ENCODE measurements at regions of chr2 and their contacts with region 1.

Region 1: DNA sequence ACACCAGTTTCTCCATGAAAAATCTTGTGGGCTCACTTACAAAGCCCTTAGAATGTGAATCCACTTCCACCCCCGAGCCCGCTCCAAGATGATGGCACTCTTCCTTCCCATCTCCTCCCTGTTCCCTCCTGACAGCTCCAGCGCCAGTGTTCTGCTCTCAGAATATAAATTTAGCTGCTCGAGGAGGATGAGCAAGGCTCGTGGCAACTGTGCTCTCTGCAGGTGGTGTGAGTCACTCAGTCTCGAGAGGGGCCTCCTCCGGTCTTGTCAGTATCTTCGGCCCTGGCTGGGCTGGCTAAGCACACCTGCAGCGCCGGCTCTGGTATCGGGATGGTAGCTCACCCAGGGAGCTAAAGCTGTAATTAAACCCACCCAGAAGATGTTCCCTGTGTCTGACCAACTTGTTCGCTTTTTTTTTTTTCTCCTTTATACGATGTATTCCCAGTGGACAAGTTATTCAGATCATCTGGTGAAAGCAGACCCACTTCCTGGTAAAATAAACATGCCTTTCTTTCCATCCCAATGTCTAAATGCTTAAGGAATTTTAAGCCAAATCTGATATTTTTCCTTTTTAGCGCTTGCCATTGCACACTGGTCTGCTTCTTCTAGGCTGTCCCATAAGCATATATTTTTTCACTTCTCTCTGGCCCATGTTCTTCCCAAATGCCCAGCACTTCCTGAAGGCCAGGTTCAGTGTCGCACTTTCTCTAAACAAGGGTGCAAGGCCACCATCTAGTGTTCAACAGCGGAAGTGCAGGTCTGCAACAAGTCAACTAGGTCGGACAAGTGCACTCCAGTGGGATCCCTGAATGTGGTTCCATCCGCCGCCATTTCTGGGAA is 31.4 kb upstream of the YPEL5 start:
- DNase-seq: peak; percentile 27 to 72
- ATAC-seq: peak; percentile 69 to 87
- H3K4me3 ChIP-seq: no peak overlapping the region
- H3K27ac ChIP-seq: no peak overlapping the region
- H3K4me1 ChIP-seq: no peaks in the 10 kb centered on the region
- H3K27me3 ChIP-seq: no peaks in the 10 kb centered on the region
- CTCF ChIP-seq: peak; percentile 71 to 85 (median 81)
- POLR2A ChIP-seq: no peak

Region 2: GRCh38 chr2:29923110-29923721 is 192.1 kb before region 1 on chr2:
- in situ Hi-C with region 1: no loop called
- intact Hi-C with region 1: loop called (anchors 5 kb)
- DNase-seq: peak; percentile 15 to 41
- ATAC-seq: peak in 1 of 2 donors; percentile 38
- H3K4me3 ChIP-seq: no peak overlapping the region
- H3K27ac ChIP-seq: no peak overlapping the region
- H3K4me1 ChIP-seq: peaks cover 10 to 12% of the 10 kb centered on the region in 2 donors
- H3K27me3 ChIP-seq: peaks cover 33 to 56% (median 46%) of the 10 kb centered on the region in 3 donors
- CTCF ChIP-seq: peak; percentile 50 to 84 (median 63)
- POLR2A ChIP-seq: no peak

Region 3: GRCh38 chr2:30095402-30095801 is 20.0 kb before region 1 on chr2:
- in situ Hi-C with region 1: no loop called
- intact Hi-C with region 1: loop called (anchors 1 kb)
- DNase-seq: no peak
- ATAC-seq: no peak
- H3K4me3 ChIP-seq: no peak overlapping the region
- H3K27ac ChIP-seq: no peak overlapping the region
- H3K4me1 ChIP-seq: no peaks in the 10 kb centered on the region
- H3K27me3 ChIP-seq: peaks cover 0 to 14% (median 6%) of the 10 kb centered on the region in 3 donors
- CTCF ChIP-seq: no peak
- POLR2A ChIP-seq: no peak

Measured in gastrocnemius medialis (tissue), 4 donors.